ENCODE measurements at regions of chr3 and their contacts with region 1.

Region 1: GRCh38 chr3:99833617-99834205 is 16.0 kb downstream of the CMSS1 start:
- DNase-seq: no peak
- H3K4me3 ChIP-seq: no peak overlapping the region
- H3K27ac ChIP-seq: no peak overlapping the region
- H3K4me1 ChIP-seq: peaks cover 0 to 5% (median 2%) of the 10 kb centered on the region in 4 experiments; a peak in 4 of 7 replicates
- H3K27me3 ChIP-seq: no peaks in the 10 kb centered on the region
- CTCF ChIP-seq: no peak
- EP300 ChIP-seq: no peak
- POLR2A ChIP-seq: no peak
- RAD21 ChIP-seq: no peak

Region 2: DNA sequence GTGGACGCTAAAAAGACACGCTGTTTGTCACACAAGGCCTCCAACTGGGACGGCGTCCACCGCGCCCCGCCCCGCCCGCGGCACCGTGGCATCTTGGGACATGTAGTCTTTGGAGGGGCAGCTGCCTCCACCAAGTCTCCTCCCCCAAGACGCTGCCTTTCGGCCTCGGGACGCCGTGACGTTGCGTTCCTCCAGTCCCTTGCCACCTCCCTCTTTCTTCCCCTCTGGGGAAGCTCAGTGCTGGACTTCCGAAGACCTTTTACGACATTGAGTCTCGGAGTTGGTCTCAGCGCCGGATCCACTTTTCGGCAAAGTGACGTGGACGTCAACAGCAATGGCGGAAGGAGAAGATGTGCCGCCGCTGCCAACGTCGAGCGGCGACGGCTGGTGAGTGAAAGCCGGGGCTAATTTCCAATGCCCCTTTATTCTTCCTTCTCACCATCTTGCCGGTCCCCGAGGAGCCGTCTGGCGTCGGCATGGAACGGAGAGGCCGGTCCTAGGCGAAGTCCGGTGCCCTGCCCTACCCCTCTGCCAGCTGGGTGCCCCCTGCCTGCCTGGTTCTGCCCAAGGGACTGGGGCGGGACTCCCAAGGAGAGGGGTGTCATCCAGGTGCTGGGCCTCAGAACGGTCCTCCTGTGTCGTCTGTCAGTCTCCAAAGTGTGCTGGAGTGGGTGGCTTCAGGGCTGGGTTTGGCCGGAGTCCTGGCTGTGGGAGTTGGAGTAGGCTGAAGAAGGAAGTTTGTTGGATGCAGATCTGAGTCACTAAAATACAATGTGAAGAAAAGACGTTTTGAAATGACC is 427.2 kb after region 1 on chr3 and contains the start of gene TBC1D23:
- CTCF ChIA-PET with region 1: interaction called, 12 read pairs
- POLR2A ChIA-PET with region 1: interaction called, 3 read pairs
- DNase-seq: peak; percentile 96 to 98
- H3K4me3 ChIP-seq: peak within 1 kb of the TSS; percentile 52 to 98 (median 89)
- H3K27ac ChIP-seq: peak within 1 kb of the TSS; percentile 38; the same call in 1 of the 2 replicates
- H3K4me1 ChIP-seq: peaks cover 0 to 4% (median 2%) of the 10 kb centered on the region in 4 experiments; a peak in 3 of 7 replicates
- H3K27me3 ChIP-seq: no peaks in the 10 kb centered on the region
- CTCF ChIP-seq: no peak
- EP300 ChIP-seq: no peak
- POLR2A ChIP-seq: peak in 1 of 2 experiments; percentile 85; a peak in 2 of 3 replicates
- RAD21 ChIP-seq: no peak
- total RNA-seq, gene TBC1D23: 24.7 and 29.3 TPM in 2 replicates